ENCODE measurements at regions of chr9 and their contacts with region 1.

Region 1: DNA sequence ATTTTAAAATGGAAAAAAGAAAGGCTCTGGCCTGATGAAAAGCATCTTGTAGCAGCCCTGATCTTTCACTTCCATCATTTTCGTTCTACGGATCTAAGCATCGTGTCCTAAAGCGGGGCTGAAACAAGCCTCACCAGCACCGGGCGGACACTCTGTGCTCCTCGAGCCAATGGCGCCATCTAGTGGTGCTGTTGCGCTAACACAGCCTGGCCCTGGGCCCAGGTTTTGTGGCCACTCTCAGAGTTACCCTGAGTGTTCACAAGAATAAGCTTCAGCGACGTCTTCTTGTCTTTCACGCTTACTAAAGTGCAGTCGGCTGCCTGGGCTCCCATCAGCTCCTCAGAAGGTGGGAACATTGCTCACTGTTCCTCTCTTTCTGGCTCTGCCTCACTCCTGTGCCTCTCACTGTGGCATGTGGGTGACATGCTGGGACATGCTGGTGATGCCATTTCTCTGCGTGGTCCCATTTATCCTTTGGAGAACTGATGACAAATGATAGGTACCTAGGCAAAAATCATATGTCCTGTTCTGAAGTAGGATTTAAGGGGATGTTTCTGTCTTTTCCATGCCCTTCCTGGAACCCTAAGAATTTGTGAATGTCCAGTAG is 32.7 kb downstream of the DMRT3 start:
- DNase-seq: peak; percentile 61 to 89 (median 69)
- ATAC-seq: peak; percentile 89 to 95 (median 94)
- H3K4me3 ChIP-seq: no peak overlapping the region
- H3K27ac ChIP-seq: no peak overlapping the region
- H3K4me1 ChIP-seq: peaks cover 0 to 8% (median 0%) of the 10 kb centered on the region in 12 donors
- H3K27me3 ChIP-seq: peaks cover 0 to 46% (median 3%) of the 10 kb centered on the region in 9 donors
- CTCF ChIP-seq: peak; percentile 84 to 98 (median 95)
- POLR2A ChIP-seq: no peak

Region 2: GRCh38 chr9:347667-348292 is 661.4 kb before region 1 on chr9:
- intact Hi-C with region 1: loop called in 5 of 10 experiments (anchors 5 to 10 kb)
- DNase-seq: no peak
- ATAC-seq: peak in 2 of 4 donors; percentile 37 to 59
- H3K4me3 ChIP-seq: no peak overlapping the region
- H3K27ac ChIP-seq: no peak overlapping the region
- H3K4me1 ChIP-seq: peaks cover 0 to under 1% (median 0%) of the 10 kb centered on the region in 12 donors
- H3K27me3 ChIP-seq: peaks cover 0 to 15% (median 0%) of the 10 kb centered on the region in 9 donors
- CTCF ChIP-seq: peak; percentile 47 to 78 (median 68)
- POLR2A ChIP-seq: no peak

Region 3: GRCh38 chr9:354453-354852 is 654.8 kb before region 1 on chr9:
- intact Hi-C with region 1: loop called in 5 of 10 experiments (anchors 5 to 10 kb)
- DNase-seq: no peak
- ATAC-seq: no peak
- H3K4me3 ChIP-seq: no peak overlapping the region
- H3K27ac ChIP-seq: no peak overlapping the region
- H3K4me1 ChIP-seq: peaks cover 0 to 6% (median 0%) of the 10 kb centered on the region in 12 donors
- H3K27me3 ChIP-seq: peaks cover 0 to 22% (median 0%) of the 10 kb centered on the region in 9 donors
- CTCF ChIP-seq: no peak
- POLR2A ChIP-seq: no peak

Region 4: GRCh38 chr9:371349-371748 is 637.9 kb before region 1 on chr9:
- intact Hi-C with region 1: loop called in 1 of 10 experiments (anchors 10 kb)
- DNase-seq: no peak
- ATAC-seq: peak in 3 of 4 donors; percentile 70 to 89 (median 80)
- H3K4me3 ChIP-seq: no peak overlapping the region
- H3K27ac ChIP-seq: no peak overlapping the region
- H3K4me1 ChIP-seq: peaks cover 0 to 15% (median 6%) of the 10 kb centered on the region in 12 donors
- H3K27me3 ChIP-seq: no peaks in the 10 kb centered on the region
- CTCF ChIP-seq: no peak
- POLR2A ChIP-seq: no peak

Region 5: DNA sequence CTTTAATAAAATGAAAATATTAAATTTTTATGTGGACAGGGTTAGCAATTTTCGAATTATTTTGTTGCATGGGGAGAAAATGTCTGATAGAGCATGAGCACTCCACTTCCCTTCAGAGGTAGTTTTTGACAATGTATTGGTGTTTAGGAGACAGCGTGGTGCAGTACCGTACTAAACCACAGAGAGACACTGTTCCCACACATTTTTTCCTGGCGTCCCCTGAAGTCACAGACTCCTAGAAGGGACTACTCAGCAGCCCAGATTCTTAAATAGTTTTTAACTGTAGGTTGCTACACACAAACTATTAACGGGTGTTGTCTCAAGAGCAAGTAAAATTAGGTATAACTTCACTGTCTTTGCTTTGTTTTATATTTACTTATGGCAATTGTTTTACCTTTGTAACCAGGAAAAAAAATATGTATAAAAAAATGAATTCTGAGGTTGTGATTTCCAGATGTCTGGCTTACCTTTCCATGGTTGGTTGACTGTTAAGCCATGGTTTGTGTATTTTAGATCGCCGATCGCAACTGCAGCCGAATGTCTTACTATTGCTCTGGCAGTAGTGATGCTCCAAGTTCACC is 623.3 kb before region 1 on chr9:
- intact Hi-C with region 1: loop called in 3 of 10 experiments (anchors 10 kb)
- DNase-seq: peak in 2 of 5 donors; percentile 19 to 34
- ATAC-seq: peak; percentile 79 to 87 (median 84)
- H3K4me3 ChIP-seq: no peak overlapping the region
- H3K27ac ChIP-seq: no peak overlapping the region
- H3K4me1 ChIP-seq: no peaks in the 10 kb centered on the region
- H3K27me3 ChIP-seq: no peaks in the 10 kb centered on the region
- CTCF ChIP-seq: peak; percentile 67 to 89 (median 84)
- POLR2A ChIP-seq: no peak

Region 6: DNA sequence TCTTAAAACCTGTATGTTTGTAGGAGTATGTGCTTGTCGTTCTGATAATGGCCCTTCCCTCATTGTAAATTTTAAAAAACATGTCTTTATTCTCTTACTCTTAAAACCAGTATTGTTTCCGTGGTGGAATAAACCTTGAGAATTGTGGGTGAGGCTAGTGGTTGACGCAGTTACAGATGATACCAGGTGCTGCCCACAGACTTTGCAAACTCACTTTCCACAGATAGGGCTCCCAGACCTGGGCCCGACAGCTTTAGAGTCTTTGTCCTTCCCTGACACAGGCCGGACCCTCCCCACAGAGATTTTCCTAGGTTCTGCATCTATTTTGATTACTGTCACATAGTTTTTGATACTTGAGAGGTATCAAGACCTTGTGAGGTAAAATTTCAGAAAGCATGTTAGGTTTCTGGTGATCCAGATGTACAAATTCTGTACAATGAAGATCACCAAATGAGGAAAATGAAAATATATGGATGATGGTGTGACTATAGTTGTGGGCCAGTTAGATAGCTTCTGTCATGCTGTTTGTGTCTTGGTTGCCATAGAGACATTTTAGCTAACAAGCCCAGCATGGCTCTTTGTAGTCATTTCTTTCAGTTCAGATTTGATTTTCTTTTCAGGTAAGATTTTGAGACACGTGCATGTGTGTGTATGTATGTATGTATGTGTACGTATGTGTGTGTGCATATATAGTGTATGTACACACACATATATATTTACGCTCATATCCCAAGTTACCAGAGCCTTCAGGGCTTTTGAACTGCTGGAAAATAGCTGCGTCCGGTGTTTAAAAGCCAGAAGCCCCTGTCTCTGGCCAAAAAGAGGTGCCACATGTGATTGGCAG is 133.9 kb before region 1 on chr9:
- intact Hi-C with region 1: no loop called
- DNase-seq: no peak
- ATAC-seq: no peak
- H3K4me3 ChIP-seq: no peak overlapping the region
- H3K27ac ChIP-seq: no peak overlapping the region
- H3K4me1 ChIP-seq: no peaks in the 10 kb centered on the region
- H3K27me3 ChIP-seq: peaks cover 0 to 15% (median 0%) of the 10 kb centered on the region in 9 donors
- CTCF ChIP-seq: no peak
- POLR2A ChIP-seq: no peak

Region 7: GRCh38 chr9:893843-894420 is 115.3 kb before region 1 on chr9:
- intact Hi-C with region 1: loop called (anchors 2 to 5 kb)
- DNase-seq: peak in 2 of 5 donors; percentile 21 to 42
- ATAC-seq: peak; percentile 50 to 80 (median 54)
- H3K4me3 ChIP-seq: no peak overlapping the region
- H3K27ac ChIP-seq: no peak overlapping the region
- H3K4me1 ChIP-seq: peaks cover 0 to 5% (median 0%) of the 10 kb centered on the region in 12 donors
- H3K27me3 ChIP-seq: peaks cover 0 to 17% (median 0%) of the 10 kb centered on the region in 9 donors
- CTCF ChIP-seq: peak; percentile 35 to 71 (median 64)
- POLR2A ChIP-seq: no peak

Region 8: DNA sequence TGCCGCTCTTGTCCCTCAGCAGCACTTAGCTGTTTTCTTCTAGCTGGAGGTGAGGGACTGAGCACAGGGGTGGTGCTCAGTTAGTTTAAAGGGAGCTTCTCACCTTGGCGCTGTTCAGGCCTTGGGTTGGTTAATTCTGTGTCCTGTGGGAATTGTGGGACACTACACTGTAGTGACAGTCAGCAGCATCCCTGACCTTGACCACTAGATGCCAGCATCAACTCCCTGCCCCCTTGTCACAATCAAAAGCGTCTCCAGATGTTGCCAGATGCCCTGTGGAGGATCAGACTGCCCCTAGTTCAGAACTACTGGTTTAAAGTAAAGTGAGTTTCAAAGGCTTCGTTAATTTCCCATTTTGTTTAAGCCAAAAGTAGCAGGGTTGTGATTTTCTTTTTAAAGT is 98.2 kb before region 1 on chr9:
- intact Hi-C with region 1: no loop called
- DNase-seq: no peak
- ATAC-seq: no peak
- H3K4me3 ChIP-seq: no peak overlapping the region
- H3K27ac ChIP-seq: no peak overlapping the region
- H3K4me1 ChIP-seq: no peaks in the 10 kb centered on the region
- H3K27me3 ChIP-seq: peaks cover 0 to 62% (median 18%) of the 10 kb centered on the region in 9 donors
- CTCF ChIP-seq: no peak
- POLR2A ChIP-seq: no peak

Region 9: GRCh38 chr9:959914-960313 is 49.3 kb before region 1 on chr9:
- intact Hi-C with region 1: no loop called
- DNase-seq: no peak
- ATAC-seq: no peak
- H3K4me3 ChIP-seq: no peak overlapping the region
- H3K27ac ChIP-seq: no peak overlapping the region
- H3K4me1 ChIP-seq: no peaks in the 10 kb centered on the region
- H3K27me3 ChIP-seq: peaks cover 0 to 87% (median 38%) of the 10 kb centered on the region in 9 donors
- CTCF ChIP-seq: no peak
- POLR2A ChIP-seq: no peak